K562 (cell line): ENCODE measurements at regions of chr6 and their contacts with region 1.

Region 1: DNA sequence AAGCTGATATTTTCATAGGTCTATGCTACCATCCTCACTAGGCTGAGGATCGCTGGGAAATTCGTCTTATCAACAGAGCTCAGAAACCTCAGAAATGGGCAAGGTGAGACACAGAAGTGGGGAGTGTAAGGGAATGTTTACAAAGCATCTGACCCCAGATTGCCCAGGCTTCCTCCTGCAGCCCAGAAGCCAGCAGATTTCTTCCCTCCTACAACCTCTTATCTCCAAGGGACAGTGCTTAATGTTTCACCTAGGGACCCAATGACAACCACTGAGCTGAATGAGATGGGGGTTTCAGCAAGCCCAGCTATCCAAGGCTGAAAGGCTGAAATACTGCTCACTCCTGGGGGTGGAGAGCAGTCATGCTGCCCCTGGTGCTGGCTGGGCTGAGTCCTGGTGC is 52.4 kb upstream of the TBC1D7 start:
- DNase-seq: peak; percentile 53 to 90 (median 72)
- ATAC-seq: peak; percentile 94
- H3K4me3 ChIP-seq: no peak overlapping the region
- H3K27ac ChIP-seq: no peak overlapping the region
- H3K4me1 ChIP-seq: peaks cover 4 to 14% of the 10 kb centered on the region in 2 experiments; a peak in 4 of 5 replicates
- H3K27me3 ChIP-seq: peaks cover 0 to 11% of the 10 kb centered on the region in 2 experiments; a peak in 1 of 5 replicates
- CTCF ChIP-seq: no peak
- EP300 ChIP-seq: peak; percentile 87
- POLR2A ChIP-seq: no peak
- RAD21 ChIP-seq: peak; percentile 11 to 30; a peak in 2 of 4 replicates

Region 2: DNA sequence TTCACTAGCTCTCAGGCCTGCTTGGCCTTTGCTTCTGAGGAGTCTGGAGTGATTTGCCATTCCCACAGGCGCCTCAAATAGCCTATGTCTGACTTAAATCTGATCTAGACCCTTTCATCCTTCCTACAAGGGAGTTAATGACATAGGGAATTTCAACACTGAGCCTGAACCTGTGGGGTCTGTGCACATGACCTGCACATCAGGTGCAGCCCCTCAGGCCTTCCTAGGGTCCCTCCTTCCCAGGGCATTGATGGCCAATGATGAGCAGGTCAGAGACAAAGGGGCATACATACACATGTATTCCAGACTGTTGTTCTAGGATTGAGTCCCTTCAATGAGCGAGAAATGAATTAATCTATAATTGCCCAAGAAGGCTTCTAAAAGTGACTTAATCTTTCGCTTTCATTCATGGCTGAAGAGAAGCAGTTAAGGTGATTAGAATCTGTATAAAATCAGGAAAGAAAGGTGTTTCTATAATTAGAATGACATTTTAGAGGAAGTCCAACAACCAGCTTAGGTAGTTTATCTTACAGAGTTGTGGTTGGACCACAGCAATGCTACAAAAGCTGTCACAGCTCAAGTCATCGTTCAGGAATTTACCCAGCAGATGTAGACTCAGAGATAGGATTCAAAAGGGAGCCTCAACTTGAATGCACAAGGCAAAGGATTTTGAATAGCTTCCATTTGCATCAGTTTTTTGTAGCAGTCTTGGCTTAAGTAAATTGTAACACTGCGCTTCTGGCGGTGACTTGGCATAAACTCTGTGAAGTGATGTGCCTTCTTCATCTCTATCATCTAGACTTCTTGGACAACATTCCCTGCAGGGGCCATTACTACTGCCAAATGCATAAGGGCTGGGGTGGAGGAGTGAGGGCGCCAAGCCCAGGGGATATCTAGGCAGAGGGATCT is 25.5 kb before region 1 on chr6:
- CTCF ChIA-PET with region 1: no interaction called
- POLR2A ChIA-PET with region 1: interaction called, 4 read pairs
- in situ Hi-C with region 1: no loop called
- intact Hi-C with region 1: loop called (anchors 2 kb)
- DNase-seq: peak; percentile 20 to 83 (median 46)
- ATAC-seq: peak; percentile 86
- H3K4me3 ChIP-seq: no peak overlapping the region
- H3K27ac ChIP-seq: peak overlapping the region; percentile 61; the same call in 2 of the 3 replicates
- H3K4me1 ChIP-seq: peaks cover 24 to 51% of the 10 kb centered on the region in 2 experiments
- H3K27me3 ChIP-seq: no peaks in the 10 kb centered on the region
- CTCF ChIP-seq: no peak
- EP300 ChIP-seq: peak; percentile 89
- POLR2A ChIP-seq: no peak
- RAD21 ChIP-seq: peak; percentile 14 to 23; a peak in 1 of 4 replicates

Region 3: DNA sequence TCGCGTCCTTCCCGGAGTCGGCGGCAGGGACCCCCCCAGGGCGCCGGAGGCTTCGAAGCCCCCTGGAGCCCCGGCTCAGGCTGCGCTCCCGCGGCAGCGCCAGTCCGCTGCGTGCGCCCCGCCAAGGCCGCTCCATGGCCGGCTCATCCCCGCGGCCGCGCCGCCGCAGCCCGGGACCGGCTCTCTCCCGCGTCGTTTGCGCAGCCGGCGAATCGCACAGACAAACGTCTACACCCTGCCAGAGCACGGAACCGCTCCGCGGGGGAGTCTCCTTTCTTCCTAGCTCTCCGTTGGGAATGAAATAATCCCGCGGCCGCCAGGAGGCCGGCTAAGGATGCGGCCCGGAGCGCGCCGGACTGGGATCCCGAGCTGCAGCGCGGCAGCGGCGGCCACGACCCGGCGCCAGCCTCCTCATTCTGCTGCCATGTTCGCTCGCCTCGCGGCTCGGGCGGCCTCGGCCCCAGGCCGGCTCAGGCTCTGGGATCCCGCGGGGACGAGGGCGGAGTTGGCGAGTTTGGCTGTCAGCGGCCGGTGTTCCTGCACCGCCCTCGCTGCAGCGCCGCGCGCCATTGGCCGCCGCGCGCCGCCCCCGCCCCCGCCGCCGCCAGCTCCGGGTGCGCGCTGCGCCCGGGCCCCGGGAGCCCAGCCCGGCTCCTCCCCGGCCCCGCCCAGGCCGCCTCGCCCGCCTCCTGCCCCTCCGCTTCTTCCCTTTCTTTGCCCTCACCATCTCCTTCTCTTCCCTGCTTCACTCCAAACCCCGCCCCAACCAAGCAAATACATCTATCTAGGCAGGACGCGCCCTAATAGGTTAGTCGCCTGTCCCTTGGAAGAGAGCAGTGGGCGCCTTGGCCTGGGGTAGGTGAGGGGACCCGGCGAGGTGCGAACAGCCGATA is 106.6 kb after region 1 on chr6 and contains the start of gene GFOD1:
- CTCF ChIA-PET with region 1: no interaction called
- POLR2A ChIA-PET with region 1: no interaction called
- in situ Hi-C with region 1: no loop called
- intact Hi-C with region 1: no loop called
- DNase-seq: peak; percentile 91 to 98 (median 97)
- ATAC-seq: peak; percentile 86
- H3K4me3 ChIP-seq: peak within 1 kb of the TSS; percentile 62
- H3K27ac ChIP-seq: peak within 1 kb of the TSS; percentile 68; the same call in 2 of the 3 replicates
- H3K4me1 ChIP-seq: peaks cover 21 to 31% of the 10 kb centered on the region in 2 experiments
- H3K27me3 ChIP-seq: no peaks in the 10 kb centered on the region; a peak in 1 of 5 replicates
- CTCF ChIP-seq: no peak
- EP300 ChIP-seq: no peak
- POLR2A ChIP-seq: peak; percentile 75
- RAD21 ChIP-seq: no peak; a peak in 1 of 4 replicates
- polyA plus RNA-seq, gene GFOD1: 5.4 to 5.9 TPM

Region 4: GRCh38 chr6:13611715-13612114 is 231.0 kb after region 1 on chr6:
- CTCF ChIA-PET with region 1: no interaction called
- POLR2A ChIA-PET with region 1: no interaction called
- in situ Hi-C with region 1: no loop called
- intact Hi-C with region 1: no loop called
- DNase-seq: peak in 2 of 4 experiments; percentile 39 to 59
- ATAC-seq: no peak
- H3K4me3 ChIP-seq: no peak overlapping the region; the same call in 1 of the 2 replicates
- H3K27ac ChIP-seq: peak overlapping the region; percentile 66
- H3K4me1 ChIP-seq: peaks cover 11 to 22% of the 10 kb centered on the region in 2 experiments
- H3K27me3 ChIP-seq: no peaks in the 10 kb centered on the region
- CTCF ChIP-seq: no peak
- EP300 ChIP-seq: no peak
- POLR2A ChIP-seq: no peak
- RAD21 ChIP-seq: no peak